HEK293T (cell line): ENCODE measurements at regions of chr5 and their contacts with region 1.

Region 1: GRCh38 chr5:149834246-149834855 is 104.2 kb downstream of the PPARGC1B start:
- DNase-seq: peak; percentile 73

Region 2: DNA sequence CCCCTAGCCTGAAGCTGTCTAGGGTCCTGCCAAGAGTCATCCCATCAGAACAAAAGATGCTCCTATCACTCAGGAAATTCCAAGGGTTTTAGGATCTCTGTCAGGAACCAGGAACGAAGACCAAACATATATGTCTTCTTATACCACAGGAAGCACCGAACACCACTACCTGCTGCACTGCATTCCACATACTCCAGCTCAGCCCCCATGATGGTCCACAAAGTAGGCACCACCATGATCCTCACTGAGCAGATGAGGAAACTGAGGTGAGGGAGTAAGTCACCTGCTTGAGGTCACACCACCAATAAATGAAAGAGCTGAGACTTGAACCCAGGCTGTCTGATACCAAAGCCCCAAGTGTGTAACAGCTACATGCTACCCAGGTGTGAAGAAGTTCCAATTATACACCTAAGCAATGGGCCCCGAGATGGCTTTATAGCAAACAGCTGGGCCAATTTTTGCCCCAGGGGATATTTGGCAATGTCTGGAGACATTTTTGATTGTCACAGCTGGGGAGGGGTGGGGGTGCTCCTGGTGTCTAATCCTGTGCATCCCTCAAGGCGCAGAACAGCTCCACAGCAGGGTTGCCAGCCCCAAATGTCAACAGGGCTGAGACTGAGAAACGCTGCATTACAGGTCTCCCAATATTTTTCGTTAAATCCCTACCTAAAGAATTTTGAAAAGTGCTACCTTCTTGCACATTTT is 40.5 kb after region 1 on chr5:
- CTCF ChIA-PET with region 1: interaction called, 12 read pairs
- POLR2A ChIA-PET with region 1: no interaction called
- DNase-seq: no peak

Region 3: DNA sequence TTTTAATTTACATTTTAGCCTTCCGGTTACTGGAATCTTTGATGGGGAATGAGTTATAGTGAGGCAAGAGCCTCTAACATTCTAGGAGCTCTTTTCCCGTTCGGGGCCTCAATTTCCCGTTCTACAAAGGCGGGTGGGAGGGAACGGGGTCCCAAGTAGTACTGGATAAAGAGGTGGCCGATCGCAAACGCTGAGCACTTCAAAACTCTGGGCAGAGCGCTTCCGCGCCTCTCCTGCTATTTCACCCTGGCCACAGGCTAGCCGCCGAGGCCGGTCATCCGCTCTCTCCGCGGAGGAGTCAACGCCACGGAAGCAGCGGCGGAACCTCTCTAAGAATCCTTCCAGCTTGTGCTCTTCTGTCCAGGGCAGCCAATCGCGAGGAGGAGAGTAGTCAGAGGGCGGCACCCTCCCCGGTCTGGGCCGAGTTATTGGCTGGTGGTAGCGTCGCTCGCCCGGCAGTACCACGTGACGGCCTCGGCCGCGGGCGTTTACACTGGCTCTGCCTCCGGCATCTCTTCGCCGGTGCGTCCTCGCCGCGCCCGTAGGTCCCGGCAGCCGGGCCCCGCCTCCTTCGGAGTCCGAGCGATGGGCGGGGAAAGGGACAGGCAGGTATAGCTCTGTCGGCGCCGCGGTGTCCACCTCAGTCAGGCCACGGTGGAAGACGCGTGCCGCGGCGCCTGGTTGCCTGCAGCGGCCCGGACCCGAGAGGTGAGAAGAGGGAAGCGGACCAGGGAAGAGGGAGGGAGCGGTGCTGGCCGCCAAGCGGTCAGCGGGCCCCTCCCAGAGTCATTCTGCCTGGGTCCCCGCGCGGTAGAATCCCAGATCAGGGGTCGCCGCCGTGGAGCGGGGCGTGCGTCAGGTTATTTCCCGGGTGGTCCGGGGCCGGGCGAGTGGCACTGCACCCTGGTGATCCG is 126.2 kb after region 1 on chr5 and contains the start of gene SLC26A2:
- CTCF ChIA-PET with region 1: interaction called, 21 read pairs
- POLR2A ChIA-PET with region 1: interaction called, 16 read pairs
- DNase-seq: peak; percentile 95

Region 4: DNA sequence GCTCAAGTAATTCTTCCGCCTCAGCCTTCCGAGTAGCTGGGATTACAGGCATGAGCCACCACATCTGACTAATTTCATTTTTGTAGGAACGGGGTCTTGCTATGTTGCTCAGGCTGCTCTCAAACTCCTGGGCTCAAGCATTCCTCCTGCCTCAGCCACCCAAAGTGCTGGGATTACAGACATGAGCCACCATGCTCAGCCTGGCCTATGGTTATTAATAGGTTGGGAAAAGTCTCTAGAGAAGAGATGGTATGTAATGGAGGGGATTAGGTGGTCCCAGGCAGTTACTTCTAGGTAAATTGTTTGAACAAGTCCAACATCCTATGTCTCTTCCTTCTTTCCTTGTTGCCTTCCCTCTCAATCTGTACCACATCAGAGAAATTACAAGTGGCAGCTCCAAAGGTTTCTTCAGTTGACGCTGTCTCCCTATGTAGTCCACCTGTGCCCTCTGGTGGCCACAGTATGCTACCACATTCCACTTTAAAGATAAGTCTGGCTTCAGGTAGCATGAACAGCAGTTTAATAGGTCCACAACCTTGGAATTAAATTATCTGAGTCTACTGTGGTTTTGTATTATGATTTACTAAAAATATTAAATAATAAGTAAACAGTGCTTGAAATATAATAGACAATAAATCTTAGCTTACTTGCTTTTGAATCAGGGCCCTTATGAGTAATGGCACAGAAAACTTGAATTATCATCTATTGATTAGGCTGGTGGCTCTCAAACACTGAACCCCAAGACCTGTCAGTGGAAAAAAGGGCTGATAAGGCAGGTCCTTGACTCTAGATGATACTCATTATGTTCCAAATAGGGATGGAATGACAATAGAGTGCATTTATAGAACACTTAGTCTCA is 156.4 kb after region 1 on chr5:
- CTCF ChIA-PET with region 1: interaction called, 39 read pairs
- POLR2A ChIA-PET with region 1: interaction called, 4 read pairs
- DNase-seq: peak; percentile 69